ENCODE measurements at regions of chr2 and their contacts with region 1.

Region 1: DNA sequence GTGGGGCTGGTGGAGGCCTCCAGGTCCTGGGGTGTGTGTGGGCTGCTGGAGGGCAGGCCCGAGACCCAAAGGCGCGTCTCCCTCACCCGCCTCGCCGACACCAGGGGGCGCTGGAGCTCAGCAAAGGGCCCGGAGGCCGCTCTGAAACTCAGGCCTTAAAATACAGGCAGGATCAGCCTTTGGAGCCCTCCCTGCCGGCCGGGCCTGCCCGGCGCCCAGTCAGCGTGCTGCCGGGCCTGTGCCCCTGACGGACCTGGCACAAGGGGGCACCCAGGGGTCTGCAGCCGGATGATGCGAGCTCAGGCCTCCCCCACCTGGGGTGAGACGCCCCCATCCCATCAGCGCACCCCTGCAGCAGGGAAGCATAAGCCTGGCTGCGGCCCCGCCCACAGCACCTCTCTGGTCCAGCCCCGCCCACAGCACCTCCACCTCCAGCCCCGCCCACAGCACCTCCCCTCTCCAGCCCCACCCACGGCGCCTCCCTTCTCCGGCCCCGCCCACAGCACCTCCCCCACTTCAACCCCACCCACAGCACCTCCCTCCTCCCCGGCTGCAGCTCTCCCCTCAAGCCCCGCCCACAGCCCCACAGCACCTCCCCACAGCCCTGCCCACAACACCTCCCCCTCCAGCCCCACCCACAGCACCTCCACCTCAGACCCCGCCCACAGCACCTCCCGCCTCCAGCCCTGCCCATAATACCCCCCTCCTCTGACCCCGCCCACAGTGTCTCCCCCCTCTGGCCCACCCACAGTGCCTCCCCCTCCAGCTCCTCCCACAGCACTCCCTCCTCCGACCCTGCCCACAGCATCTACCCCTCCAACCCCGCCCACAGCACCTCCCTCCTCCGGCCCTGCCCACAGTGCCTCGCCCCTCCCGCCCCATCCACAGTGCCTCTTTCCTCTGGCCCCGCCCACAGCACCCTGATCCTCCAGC is 92.8 kb upstream of the OTOS start:
- DNase-seq: peak; percentile 84
- ATAC-seq: peak; percentile 87
- H3K4me3 ChIP-seq: peak overlapping the region; percentile 68
- H3K27ac ChIP-seq: no peak overlapping the region
- H3K4me1 ChIP-seq: peaks cover 12% of the 10 kb centered on the region
- H3K27me3 ChIP-seq: no peaks in the 10 kb centered on the region
- CTCF ChIP-seq: peak; percentile 83

Region 2: GRCh38 chr2:239910851-239911640 is 322.2 kb before region 1 on chr2:
- CTCF ChIA-PET with region 1: no interaction called
- POLR2A ChIA-PET with region 1: no interaction called
- intact Hi-C with region 1: no loop called
- DNase-seq: no peak
- ATAC-seq: no peak
- H3K4me3 ChIP-seq: no peak overlapping the region
- H3K27ac ChIP-seq: no peak overlapping the region
- H3K4me1 ChIP-seq: no peaks in the 10 kb centered on the region
- H3K27me3 ChIP-seq: no peaks in the 10 kb centered on the region
- CTCF ChIP-seq: no peak

Region 3: DNA sequence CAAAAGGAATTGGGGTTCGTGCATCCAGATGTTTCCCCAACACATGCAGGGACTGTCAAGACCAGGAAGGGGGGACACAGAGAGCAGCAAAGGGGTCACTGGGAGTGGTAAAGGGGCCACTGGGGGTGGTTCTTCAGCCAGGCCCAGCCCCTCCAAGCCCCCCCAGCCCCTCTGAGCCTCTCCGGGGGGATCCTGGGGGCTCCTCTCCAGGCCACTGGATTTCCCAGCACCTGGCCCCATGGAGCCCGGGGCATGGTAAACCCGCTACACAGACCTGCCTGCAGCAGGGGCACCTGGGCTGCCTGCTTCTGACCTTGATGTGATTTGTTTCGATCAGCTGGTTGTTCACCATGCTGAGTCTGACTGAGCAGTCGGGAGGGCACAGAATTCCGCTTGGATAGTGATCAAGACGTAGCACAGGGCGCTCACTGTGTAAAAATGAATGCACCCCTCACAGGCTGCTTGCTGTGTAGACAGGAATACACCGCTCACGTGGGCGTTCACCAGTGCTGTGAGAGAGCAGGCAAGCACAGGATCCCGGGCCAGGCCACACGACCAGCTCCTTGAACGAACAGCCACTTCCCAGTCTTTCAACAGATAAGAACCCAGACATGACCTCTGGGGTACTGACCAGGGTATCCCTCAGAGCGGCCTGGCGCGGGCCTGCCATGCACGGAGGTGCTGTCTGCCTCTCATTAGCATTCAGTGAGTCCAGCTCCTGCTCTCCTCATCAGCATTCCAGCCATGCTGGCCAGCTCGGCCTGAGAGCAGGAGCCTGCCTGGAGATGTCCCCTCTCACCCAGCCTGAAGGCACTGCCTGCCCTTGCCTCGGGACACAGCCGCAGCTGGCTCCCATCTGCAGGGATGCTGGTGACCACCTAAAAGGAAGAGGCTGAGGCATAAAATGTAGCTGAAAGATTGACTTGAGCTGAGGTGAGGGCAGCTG is 19.5 kb before region 1 on chr2:
- CTCF ChIA-PET with region 1: no interaction called
- POLR2A ChIA-PET with region 1: no interaction called
- intact Hi-C with region 1: no loop called
- DNase-seq: no peak
- ATAC-seq: no peak
- H3K4me3 ChIP-seq: no peak overlapping the region
- H3K27ac ChIP-seq: no peak overlapping the region
- H3K4me1 ChIP-seq: no peaks in the 10 kb centered on the region
- H3K27me3 ChIP-seq: no peaks in the 10 kb centered on the region
- CTCF ChIP-seq: no peak

Region 4: DNA sequence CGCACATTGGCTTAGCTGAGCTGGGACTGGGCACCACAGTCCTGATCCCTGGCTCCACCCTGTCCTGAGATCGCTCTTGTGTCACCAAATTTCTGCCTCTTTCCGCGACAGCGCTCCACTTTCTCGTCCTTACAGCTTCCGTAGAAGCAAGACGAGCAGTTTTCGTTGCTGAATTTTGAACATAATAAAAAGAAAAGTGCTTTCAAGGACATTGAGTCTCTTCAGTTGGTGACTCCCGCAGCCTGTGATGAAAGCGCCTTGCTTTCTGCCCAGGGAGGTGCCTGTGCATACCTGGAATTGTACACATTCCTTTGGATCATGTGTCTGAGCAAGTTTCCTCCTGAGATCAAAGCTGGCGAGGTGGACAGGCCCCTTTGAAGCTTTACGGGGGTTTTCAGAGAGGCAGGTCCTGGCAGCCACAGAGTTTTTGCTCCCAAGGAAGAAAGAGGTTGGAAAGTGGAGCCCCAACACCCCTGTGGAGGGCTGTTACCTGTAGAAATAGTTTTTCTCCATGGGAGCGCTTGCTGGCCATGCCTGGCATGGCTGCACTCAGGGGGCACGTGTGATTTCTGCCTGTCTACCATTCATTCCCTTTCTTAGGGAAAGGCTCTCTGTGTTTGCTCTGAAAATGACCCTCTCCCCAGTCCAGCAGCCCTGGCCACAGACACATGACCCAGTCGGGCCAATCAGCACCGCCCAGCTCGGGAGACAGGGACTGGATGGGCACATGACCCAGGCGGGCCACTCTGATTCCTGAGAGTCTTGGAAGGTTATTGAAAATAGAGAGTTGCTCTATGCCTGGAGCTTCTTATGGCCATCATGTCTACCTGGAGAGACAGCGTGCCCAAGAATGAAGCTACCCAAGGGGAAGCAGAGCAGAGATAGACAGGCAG is 22.8 kb after region 1 on chr2:
- CTCF ChIA-PET with region 1: no interaction called
- POLR2A ChIA-PET with region 1: no interaction called
- intact Hi-C with region 1: no loop called
- DNase-seq: peak; percentile 58
- ATAC-seq: no peak
- H3K4me3 ChIP-seq: no peak overlapping the region
- H3K27ac ChIP-seq: no peak overlapping the region
- H3K4me1 ChIP-seq: peaks cover 17% of the 10 kb centered on the region
- H3K27me3 ChIP-seq: no peaks in the 10 kb centered on the region
- CTCF ChIP-seq: no peak

Region 5: GRCh38 chr2:240293557-240294461 is 60.6 kb after region 1 on chr2:
- CTCF ChIA-PET with region 1: no interaction called
- POLR2A ChIA-PET with region 1: no interaction called
- intact Hi-C with region 1: no loop called
- DNase-seq: no peak
- ATAC-seq: no peak
- H3K4me3 ChIP-seq: no peak overlapping the region
- H3K27ac ChIP-seq: no peak overlapping the region
- H3K4me1 ChIP-seq: no peaks in the 10 kb centered on the region
- H3K27me3 ChIP-seq: peaks cover 20% of the 10 kb centered on the region; the same call in 1 of the 2 replicates
- CTCF ChIP-seq: no peak

Region 6: GRCh38 chr2:240369801-240370585 is 136.8 kb after region 1 on chr2:
- CTCF ChIA-PET with region 1: no interaction called
- POLR2A ChIA-PET with region 1: interaction called, 3 read pairs
- intact Hi-C with region 1: loop called (anchors 5 kb)
- DNase-seq: peak; percentile 90
- ATAC-seq: peak; percentile 93
- H3K4me3 ChIP-seq: peak overlapping the region; percentile 37; the same call in 1 of the 2 replicates
- H3K27ac ChIP-seq: peak overlapping the region; percentile 95
- H3K4me1 ChIP-seq: peaks cover 30% of the 10 kb centered on the region
- H3K27me3 ChIP-seq: no peaks in the 10 kb centered on the region
- CTCF ChIP-seq: 0 out of 2 replicates have a peak, but pooled peaks have one; percentile 8

Measured in PC-3 (cell line).